WTC11 (cell line): ENCODE measurements at regions of chr7 and their contacts with region 1.

Region 1: GRCh38 chr7:99141841-99142726 is 1.8 kb downstream of the SMURF1 start:
- DNase-seq: peak; percentile 64
- ATAC-seq: peak; percentile 59
- H3K4me3 Mint-ChIP-seq: peak overlapping the region; percentile 76
- H3K27ac Mint-ChIP-seq: peak overlapping the region; percentile 95
- H3K4me1 Mint-ChIP-seq: peaks cover 52% of the 10 kb centered on the region
- H3K27me3 Mint-ChIP-seq: no peaks in the 10 kb centered on the region
- CTCF ChIP-seq: no peak

Region 2: DNA sequence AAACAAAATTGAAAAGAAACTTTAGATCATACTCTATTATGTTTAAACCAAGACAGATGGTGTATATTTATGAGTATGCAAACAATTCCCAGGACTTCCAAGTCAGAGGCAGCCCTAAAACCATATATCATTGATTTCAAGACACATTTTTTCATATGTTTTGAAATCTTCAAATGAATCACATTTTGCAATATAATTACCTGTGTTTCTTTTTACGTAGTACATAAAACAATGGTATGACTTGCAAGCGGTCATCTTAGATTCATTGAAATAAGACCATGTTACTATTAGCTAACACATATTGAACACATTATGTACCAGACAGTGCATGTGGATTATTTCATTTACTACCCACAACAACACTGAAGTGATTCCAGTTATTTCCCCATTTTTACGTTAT is 13.1 kb before region 1 on chr7:
- CTCF ChIA-PET with region 1: interaction called, 6 read pairs
- POLR2A ChIA-PET with region 1: interaction called, 11 read pairs
- DNase-seq: no peak
- ATAC-seq: no peak
- H3K4me3 Mint-ChIP-seq: no peak overlapping the region
- H3K27ac Mint-ChIP-seq: no peak overlapping the region
- H3K4me1 Mint-ChIP-seq: peaks cover 31% of the 10 kb centered on the region
- H3K27me3 Mint-ChIP-seq: no peaks in the 10 kb centered on the region
- CTCF ChIP-seq: no peak